Upper lobe of right lung (tissue), 1 donor: ENCODE measurements at regions of chr2 and their contacts with region 1.

Region 1: DNA sequence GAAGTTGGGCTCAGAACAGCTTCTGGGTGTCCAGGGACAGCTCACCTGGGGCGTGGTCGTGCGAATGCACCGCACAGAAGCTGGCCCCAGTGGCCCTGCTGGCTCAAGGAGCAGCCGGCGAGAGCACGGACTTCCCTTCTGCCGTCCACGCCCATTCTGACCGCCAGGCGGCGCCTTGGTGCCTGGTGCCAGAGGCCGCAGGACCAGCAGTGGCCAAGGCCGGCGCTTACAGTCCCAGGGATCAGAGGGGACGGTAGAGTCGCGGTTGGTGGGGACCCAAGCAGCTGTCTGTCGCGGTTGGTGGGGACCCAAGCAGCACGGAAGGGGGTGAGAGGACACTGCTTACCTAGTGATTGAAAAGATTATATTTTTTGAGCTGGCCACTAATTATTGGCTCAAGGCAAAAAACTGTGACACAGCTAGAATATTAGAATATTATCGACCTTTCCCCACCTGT is 25.7 kb downstream of the NPPC start:
- DNase-seq: peak; percentile 92
- ATAC-seq: peak; percentile 96
- H3K4me3 ChIP-seq: no peak overlapping the region
- H3K27ac ChIP-seq: no peak overlapping the region
- H3K4me1 ChIP-seq: no peaks in the 10 kb centered on the region
- H3K27me3 ChIP-seq: no peaks in the 10 kb centered on the region
- CTCF ChIP-seq: peak; percentile 78

Region 2: GRCh38 chr2:230991598-230991997 is 908.9 kb before region 1 on chr2:
- intact Hi-C with region 1: no loop called
- DNase-seq: no peak
- ATAC-seq: no peak
- H3K4me3 ChIP-seq: no peak overlapping the region
- H3K27ac ChIP-seq: no peak overlapping the region
- H3K4me1 ChIP-seq: peaks cover 3% of the 10 kb centered on the region
- H3K27me3 ChIP-seq: peaks cover 35% of the 10 kb centered on the region
- CTCF ChIP-seq: no peak

Region 3: GRCh38 chr2:232521959-232522622 is 621.6 kb after region 1 on chr2:
- intact Hi-C with region 1: loop called (anchors 10 kb)
- DNase-seq: peak; percentile 79
- ATAC-seq: peak; percentile 75
- H3K4me3 ChIP-seq: peak overlapping the region; percentile 14
- H3K27ac ChIP-seq: no peak overlapping the region
- H3K4me1 ChIP-seq: peaks cover 15% of the 10 kb centered on the region
- H3K27me3 ChIP-seq: peaks cover 69% of the 10 kb centered on the region
- CTCF ChIP-seq: peak; percentile 92